Ovary (tissue), 10 donors: ENCODE measurements at regions of chr19 and their contacts with region 1.

Region 1: GRCh38 chr19:51771376-51772130 is 10.6 kb downstream of the FPR2 start:
- DNase-seq: peak in 4 of 5 donors; percentile 38 to 48 (median 45)
- H3K4me3 ChIP-seq: no peak overlapping the region
- H3K27ac ChIP-seq: peak overlapping the region in 1 of 2 donors; percentile 50
- H3K4me1 ChIP-seq: no peaks in the 10 kb centered on the region
- H3K27me3 ChIP-seq: no peaks in the 10 kb centered on the region
- CTCF ChIP-seq: no peak
- EP300 ChIP-seq: peak; percentile 21
- POLR2A ChIP-seq: peak; percentile 10

Region 2: GRCh38 chr19:51698241-51698651 is 73.3 kb before region 1 on chr19:
- intact Hi-C with region 1: loop called in 1 of 4 experiments (anchors 5 kb)
- DNase-seq: no peak
- H3K4me3 ChIP-seq: no peak overlapping the region
- H3K27ac ChIP-seq: no peak overlapping the region
- H3K4me1 ChIP-seq: peaks cover 4% of the 10 kb centered on the region
- H3K27me3 ChIP-seq: no peaks in the 10 kb centered on the region
- CTCF ChIP-seq: no peak
- EP300 ChIP-seq: no peak
- POLR2A ChIP-seq: no peak